Naive thymus-derived CD4-positive, alpha-beta T cell (primary cell): ENCODE measurements at regions of chr4 and their contacts with region 1.

Region 1: DNA sequence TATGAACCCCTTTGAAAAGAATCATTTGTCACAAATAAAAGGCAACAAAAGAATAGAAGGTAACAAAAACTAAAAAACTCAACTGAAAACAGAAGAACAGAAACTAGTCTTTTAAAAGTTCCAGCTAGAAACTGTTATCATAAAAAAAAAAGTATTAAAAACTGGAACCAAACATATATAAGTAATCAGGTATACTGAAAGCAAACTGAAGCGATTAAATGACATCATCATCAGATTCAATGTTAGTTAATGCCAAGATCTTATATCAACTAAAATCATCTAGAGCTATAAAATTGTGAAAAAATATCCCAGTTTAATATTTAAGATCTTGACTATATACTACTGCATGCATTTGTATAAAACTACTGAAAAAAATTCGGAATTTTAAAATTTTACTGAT is 36.0 kb downstream of the CENPE start:
- DNase-seq: no peak
- ATAC-seq: no peak
- H3K4me3 ChIP-seq: no peak overlapping the region
- H3K4me3 Mint-ChIP-seq: no peak overlapping the region
- H3K27ac ChIP-seq: no peak overlapping the region
- H3K27ac Mint-ChIP-seq: no peak overlapping the region
- H3K4me1 ChIP-seq: no peaks in the 10 kb centered on the region
- H3K4me1 Mint-ChIP-seq: peaks cover 0 to 8% (median 0%) of the 10 kb centered on the region in 7 donors
- H3K27me3 ChIP-seq: no peaks in the 10 kb centered on the region
- H3K27me3 Mint-ChIP-seq: no peaks in the 10 kb centered on the region

Region 2: DNA sequence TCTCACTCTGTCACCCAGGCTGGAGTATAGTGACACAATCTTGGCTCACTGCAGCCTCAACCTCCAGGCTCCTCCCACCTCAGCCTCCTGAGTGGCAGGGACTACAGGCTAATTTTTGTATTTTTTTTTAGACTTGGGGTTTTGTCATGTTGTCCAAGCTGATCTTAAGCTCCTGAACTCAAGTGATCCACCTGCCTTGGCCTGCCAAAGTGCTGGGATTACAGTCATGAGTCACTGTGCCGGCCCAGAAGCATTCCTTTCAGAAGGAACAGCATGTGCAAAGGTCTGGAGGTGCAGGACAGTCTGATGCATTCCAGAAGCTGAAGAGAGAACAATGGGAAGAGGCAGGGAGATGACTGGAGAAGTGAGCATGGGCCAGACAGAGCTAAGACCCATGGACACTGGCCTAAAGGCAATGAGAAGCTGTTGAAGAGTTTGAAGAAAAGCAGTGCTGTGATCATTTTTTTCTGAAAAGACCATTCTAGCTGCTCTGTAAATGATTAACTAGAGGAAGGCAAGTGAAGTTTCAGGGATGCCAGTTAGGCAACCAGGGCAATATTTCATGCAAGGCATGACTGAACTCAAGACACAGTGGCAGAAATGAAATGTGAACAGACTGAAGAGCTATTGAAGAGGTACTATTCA is 444.6 kb before region 1 on chr4:
- CTCF ChIA-PET with region 1: no interaction called
- POLR2A ChIA-PET with region 1: no interaction called
- intact Hi-C with region 1: no loop called
- DNase-seq: no peak
- ATAC-seq: no peak
- H3K4me3 ChIP-seq: no peak overlapping the region
- H3K4me3 Mint-ChIP-seq: no peak overlapping the region
- H3K27ac ChIP-seq: no peak overlapping the region
- H3K27ac Mint-ChIP-seq: no peak overlapping the region
- H3K4me1 ChIP-seq: no peaks in the 10 kb centered on the region
- H3K4me1 Mint-ChIP-seq: peaks cover 0 to 8% (median 4%) of the 10 kb centered on the region in 7 donors
- H3K27me3 ChIP-seq: no peaks in the 10 kb centered on the region
- H3K27me3 Mint-ChIP-seq: no peaks in the 10 kb centered on the region

Region 3: DNA sequence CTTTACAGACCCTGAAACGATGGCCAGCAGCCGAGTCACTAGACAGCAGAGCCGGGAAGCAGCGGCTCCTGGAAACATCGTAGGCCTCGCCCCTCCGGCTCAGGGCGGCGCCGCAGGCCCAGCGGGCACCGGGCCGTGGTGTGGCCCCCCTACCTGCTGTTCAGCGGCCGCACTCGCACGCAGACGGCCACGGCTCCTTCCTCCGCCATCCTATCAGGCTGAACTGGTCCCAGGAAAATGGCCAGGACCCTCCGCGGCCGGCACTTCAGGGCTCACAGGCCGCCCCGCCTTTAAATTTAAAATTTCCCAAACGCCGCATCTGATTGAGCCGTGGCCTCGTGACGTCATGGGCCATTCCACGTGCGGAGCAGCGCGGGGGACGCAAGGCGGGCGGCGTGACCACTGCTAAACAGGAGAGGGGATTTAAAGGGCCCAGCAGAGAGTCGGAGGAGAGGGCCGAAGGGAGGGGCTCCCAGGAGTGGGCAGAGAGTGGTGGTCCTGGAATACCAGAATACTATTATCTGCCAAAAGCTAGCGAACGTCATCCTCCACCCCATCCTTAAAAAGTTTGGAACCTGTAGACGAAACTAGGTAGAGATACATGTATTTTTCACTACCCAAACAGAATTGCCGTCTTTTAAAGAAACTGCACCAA is 36.1 kb after region 1 on chr4 and contains the start of gene CENPE:
- CTCF ChIA-PET with region 1: no interaction called
- POLR2A ChIA-PET with region 1: no interaction called
- intact Hi-C with region 1: loop called in 1 of 2 experiments (anchors 5 kb)
- DNase-seq: peak; percentile 77 to 90 (median 87)
- ATAC-seq: peak; percentile 93
- H3K4me3 ChIP-seq: peak within 1 kb of the TSS; percentile 95
- H3K4me3 Mint-ChIP-seq: peak within 1 kb of the TSS; percentile 81 to 99 (median 96)
- H3K27ac ChIP-seq: peak within 1 kb of the TSS; percentile 91
- H3K27ac Mint-ChIP-seq: peak within 1 kb of the TSS; percentile 87 to 100 (median 99)
- H3K4me1 ChIP-seq: peaks cover 0 to 6% of the 10 kb centered on the region in 2 donors
- H3K4me1 Mint-ChIP-seq: peaks cover 6 to 29% (median 10%) of the 10 kb centered on the region in 7 donors
- H3K27me3 ChIP-seq: no peaks in the 10 kb centered on the region
- H3K27me3 Mint-ChIP-seq: peaks cover 0 to 21% (median 7%) of the 10 kb centered on the region in 5 donors
- total RNA-seq, gene CENPE: 1.1 to 35.8 (median 1.5) TPM